K562 (cell line): ENCODE measurements at regions of chr21 and their contacts with region 1.

Region 1: GRCh38 chr21:43854773-43855633 is 10.0 kb upstream of the AGPAT3 start:
- DNase-seq: peak; percentile 88 to 97 (median 92)
- ATAC-seq: peak; percentile 96
- H3K4me3 ChIP-seq: peak overlapping the region; percentile 15; the same call in 1 of the 2 replicates
- H3K27ac ChIP-seq: peak overlapping the region; percentile 89
- H3K4me1 ChIP-seq: peaks cover 33 to 45% of the 10 kb centered on the region in 2 experiments
- H3K27me3 ChIP-seq: no peaks in the 10 kb centered on the region
- CTCF ChIP-seq: peak in 1 of 3 experiments; percentile 28; a peak in 1 of 6 replicates
- EP300 ChIP-seq: peak; percentile 90
- POLR2A ChIP-seq: peak; percentile 92
- RAD21 ChIP-seq: peak; percentile 28 to 38; a peak in 3 of 4 replicates

Region 2: DNA sequence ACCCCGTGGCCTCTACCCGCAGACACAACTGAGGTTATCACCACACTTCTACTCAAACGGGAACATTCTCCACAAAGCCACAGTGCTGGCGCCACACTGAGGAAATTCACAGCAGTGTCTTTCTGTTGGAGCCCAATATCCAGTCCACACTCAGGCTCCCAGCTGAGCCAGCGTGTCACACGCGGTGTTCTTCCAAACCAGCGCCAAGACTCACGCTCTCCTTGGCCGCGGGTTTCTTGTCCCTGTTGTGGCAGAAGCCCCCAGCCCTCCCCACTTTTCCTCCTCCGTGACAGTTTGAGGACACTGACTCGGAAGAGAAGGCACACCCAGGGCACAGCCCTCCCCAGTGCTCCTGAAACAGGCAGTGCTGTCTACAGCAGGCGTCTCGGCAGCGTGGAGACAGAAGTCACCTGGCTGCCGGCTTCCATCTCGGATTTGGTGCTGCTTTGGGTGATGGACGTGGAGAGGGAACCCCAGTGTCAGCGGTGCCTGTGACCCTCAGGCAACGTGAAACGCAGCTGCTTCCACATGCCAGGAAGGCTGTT is 25.4 kb before region 1 on chr21:
- CTCF ChIA-PET with region 1: no interaction called
- POLR2A ChIA-PET with region 1: interaction called, 3 read pairs
- in situ Hi-C with region 1: no loop called
- intact Hi-C with region 1: loop called (anchors 2 kb)
- DNase-seq: peak in 1 of 4 experiments; percentile 70
- ATAC-seq: peak; percentile 87
- H3K4me3 ChIP-seq: no peak overlapping the region
- H3K27ac ChIP-seq: 0 out of 3 replicates have a peak overlapping the region, but pooled peaks have one; percentile 19
- H3K4me1 ChIP-seq: peaks cover 10 to 56% of the 10 kb centered on the region in 2 experiments
- H3K27me3 ChIP-seq: no peaks in the 10 kb centered on the region
- CTCF ChIP-seq: peak; percentile 59 to 66 (median 65)
- EP300 ChIP-seq: no peak
- POLR2A ChIP-seq: no peak
- RAD21 ChIP-seq: peak in 1 of 2 experiments; percentile 70; a peak in 2 of 4 replicates

Region 3: DNA sequence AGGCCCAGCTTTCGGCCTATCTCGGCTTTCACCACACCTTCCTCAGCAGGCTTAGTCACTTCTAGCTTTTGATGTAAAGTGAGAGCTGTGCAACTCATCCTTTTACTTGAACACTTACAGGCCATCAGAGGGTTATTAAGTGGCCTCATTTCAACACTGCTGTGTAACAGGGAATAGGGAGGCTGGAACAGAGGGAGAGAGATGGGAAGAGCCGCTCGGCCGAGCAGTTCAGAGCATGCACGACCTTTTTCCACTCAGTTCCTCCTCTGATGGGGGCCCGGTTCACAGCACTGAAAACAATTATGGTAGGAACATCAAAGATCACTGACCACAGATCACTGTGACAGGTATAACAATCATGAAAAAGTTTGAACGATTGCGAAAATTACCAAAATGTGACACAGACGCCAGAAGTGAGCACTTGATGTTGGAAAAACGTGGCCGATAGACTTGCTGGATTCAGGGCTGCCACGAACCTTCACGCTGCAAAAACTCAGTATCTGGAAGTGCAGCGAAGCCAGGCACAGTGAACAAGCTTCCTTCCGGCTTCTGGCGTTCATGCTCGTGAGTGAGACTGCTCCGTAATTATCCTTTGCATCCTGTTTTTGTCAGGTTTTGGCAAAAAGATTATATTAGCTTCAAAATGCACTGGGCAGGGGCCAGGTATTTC is 38.7 kb after region 1 on chr21:
- CTCF ChIA-PET with region 1: no interaction called
- POLR2A ChIA-PET with region 1: interaction called, 3 read pairs
- in situ Hi-C with region 1: no loop called
- intact Hi-C with region 1: loop called (anchors 5 kb)
- DNase-seq: peak in 2 of 4 experiments; percentile 22 to 79
- ATAC-seq: peak; percentile 77
- H3K4me3 ChIP-seq: peak overlapping the region; percentile 6; the same call in 1 of the 2 replicates
- H3K27ac ChIP-seq: peak overlapping the region; percentile 75
- H3K4me1 ChIP-seq: peaks cover 25 to 30% of the 10 kb centered on the region in 2 experiments
- H3K27me3 ChIP-seq: no peaks in the 10 kb centered on the region
- CTCF ChIP-seq: no peak
- EP300 ChIP-seq: peak; percentile 5; the same call in 1 of the 2 replicates
- POLR2A ChIP-seq: 0 out of 2 replicates have a peak, but pooled peaks have one; percentile 27
- RAD21 ChIP-seq: no peak

Region 4: DNA sequence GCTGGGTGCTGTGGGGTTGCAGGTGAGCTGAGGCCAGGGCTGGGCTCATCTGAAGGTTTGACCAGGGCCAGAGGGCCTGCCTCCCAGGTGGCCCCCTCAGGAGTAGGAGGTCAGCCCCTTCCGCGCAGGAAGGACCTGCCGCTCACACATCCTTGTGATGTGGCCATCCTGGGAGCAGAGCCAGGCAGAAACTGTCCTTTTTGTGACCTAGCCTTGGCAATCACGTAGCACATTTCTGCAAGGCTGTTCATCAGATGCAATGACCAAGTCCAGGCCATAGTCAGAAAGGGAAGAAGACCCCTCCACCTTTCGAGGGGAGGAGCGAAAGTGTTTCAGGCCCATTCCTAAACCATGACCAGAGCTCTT is 101.7 kb after region 1 on chr21:
- CTCF ChIA-PET with region 1: no interaction called
- POLR2A ChIA-PET with region 1: no interaction called
- in situ Hi-C with region 1: no loop called
- intact Hi-C with region 1: no loop called
- DNase-seq: no peak
- ATAC-seq: no peak
- H3K4me3 ChIP-seq: no peak overlapping the region
- H3K27ac ChIP-seq: no peak overlapping the region
- H3K4me1 ChIP-seq: peaks cover 0 to 47% of the 10 kb centered on the region in 2 experiments; a peak in 2 of 5 replicates
- H3K27me3 ChIP-seq: no peaks in the 10 kb centered on the region
- CTCF ChIP-seq: no peak
- EP300 ChIP-seq: no peak
- POLR2A ChIP-seq: no peak
- RAD21 ChIP-seq: no peak

Region 5: DNA sequence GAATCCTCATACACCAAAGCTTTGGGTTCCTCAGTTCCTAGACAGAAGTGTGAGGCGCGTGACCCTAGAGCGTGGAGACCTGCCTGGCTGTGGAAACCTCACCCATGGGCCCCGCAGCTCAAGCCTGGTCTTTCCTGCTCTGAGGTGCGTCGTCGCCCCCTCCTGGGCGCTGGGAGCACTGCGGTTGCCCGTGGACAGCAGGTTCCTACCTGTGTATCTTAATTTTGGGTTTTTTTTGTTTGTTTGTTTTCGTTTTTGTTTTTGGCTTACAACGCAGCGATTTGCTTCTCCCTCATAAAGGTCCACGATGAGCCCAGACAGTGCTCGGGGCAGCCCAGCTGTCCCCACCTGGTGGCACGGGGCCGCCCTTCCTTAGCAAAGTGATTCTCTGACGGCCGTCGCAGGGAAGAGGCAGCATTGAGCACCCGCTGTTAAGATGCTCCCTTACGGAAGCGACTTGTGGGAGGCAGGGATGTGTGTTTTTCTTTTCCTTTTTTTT is 120.5 kb after region 1 on chr21:
- CTCF ChIA-PET with region 1: no interaction called
- POLR2A ChIA-PET with region 1: interaction called, 10 read pairs
- in situ Hi-C with region 1: no loop called
- intact Hi-C with region 1: no loop called
- DNase-seq: peak; percentile 88 to 92 (median 88)
- ATAC-seq: peak; percentile 96
- H3K4me3 ChIP-seq: no peak overlapping the region
- H3K27ac ChIP-seq: peak overlapping the region; percentile 14; the same call in 1 of the 3 replicates
- H3K4me1 ChIP-seq: peaks cover 14 to 36% of the 10 kb centered on the region in 2 experiments; a peak in 4 of 5 replicates
- H3K27me3 ChIP-seq: no peaks in the 10 kb centered on the region
- CTCF ChIP-seq: peak; percentile 95 to 99 (median 96)
- EP300 ChIP-seq: no peak
- POLR2A ChIP-seq: no peak
- RAD21 ChIP-seq: peak; percentile 81 to 94